ENCODE measurements at regions of chr22 and their contacts with region 1.

Region 1: GRCh38 chr22:38506118-38506962 is at the start of gene DDX17:
- DNase-seq: peak; percentile 98
- H3K4me3 ChIP-seq: peak within 1 kb of the TSS; percentile 66 to 89 (median 82)
- H3K27ac ChIP-seq: peak within 1 kb of the TSS; percentile 96
- H3K4me1 ChIP-seq: peaks cover 21% of the 10 kb centered on the region
- H3K27me3 ChIP-seq: no peaks in the 10 kb centered on the region
- CTCF ChIP-seq: no peak
- POLR2A ChIP-seq: peak; percentile 80
- total RNA-seq, gene DDX17: 377 and 393 TPM in 2 replicates

Region 2: DNA sequence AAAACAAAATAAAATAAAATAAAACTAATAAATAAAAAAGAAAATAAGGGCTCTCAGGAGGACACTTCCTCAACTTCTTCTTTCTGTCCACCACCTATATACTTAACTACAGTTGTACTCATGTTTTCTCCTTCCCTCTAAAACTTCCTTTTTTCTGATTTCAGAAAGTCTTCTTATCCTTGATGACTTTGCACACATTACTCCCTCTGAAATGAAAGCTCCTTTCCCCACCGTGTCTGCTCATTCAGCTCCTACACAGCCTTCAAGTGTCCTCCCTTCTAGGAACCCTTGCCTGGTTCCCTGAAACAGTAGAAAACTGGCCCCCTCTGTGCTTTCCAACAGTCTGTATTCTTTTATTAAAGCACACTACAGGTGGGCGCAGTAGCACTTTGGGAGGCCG is 18.1 kb after region 1 on chr22:
- CTCF ChIA-PET with region 1: interaction called, 12 read pairs
- POLR2A ChIA-PET with region 1: interaction called, 3 read pairs
- dilution Hi-C with region 1: no loop called
- intact Hi-C with region 1: no loop called
- DNase-seq: no peak
- H3K4me3 ChIP-seq: no peak overlapping the region
- H3K27ac ChIP-seq: no peak overlapping the region
- H3K4me1 ChIP-seq: no peaks in the 10 kb centered on the region
- H3K27me3 ChIP-seq: peaks cover 0 to 2% of the 10 kb centered on the region in 2 experiments
- CTCF ChIP-seq: no peak
- POLR2A ChIP-seq: no peak

Region 3: GRCh38 chr22:38569972-38570778 is 63.8 kb after region 1 on chr22 and contains the start of gene DMC1:
- CTCF ChIA-PET with region 1: interaction called, 3 read pairs
- POLR2A ChIA-PET with region 1: no interaction called
- dilution Hi-C with region 1: no loop called
- intact Hi-C with region 1: loop called (anchors 2 kb)
- DNase-seq: peak; percentile 69
- H3K4me3 ChIP-seq: peak within 1 kb of the TSS; percentile 19 to 75 (median 60)
- H3K27ac ChIP-seq: no peak within 1 kb of the TSS
- H3K4me1 ChIP-seq: peaks cover 7% of the 10 kb centered on the region
- H3K27me3 ChIP-seq: peaks cover 0 to 2% of the 10 kb centered on the region in 2 experiments
- CTCF ChIP-seq: no peak
- POLR2A ChIP-seq: no peak
- total RNA-seq, gene DMC1: 0.91 and 1.1 TPM in 2 replicates

Region 4: GRCh38 chr22:38656256-38657044 is 150.1 kb after region 1 on chr22 and contains the starts of genes CBY1 and FAM227A:
- CTCF ChIA-PET with region 1: no interaction called
- POLR2A ChIA-PET with region 1: no interaction called
- dilution Hi-C with region 1: no loop called
- intact Hi-C with region 1: loop called (anchors 1 kb)
- DNase-seq: peak; percentile 87
- H3K4me3 ChIP-seq: peak within 1 kb of the TSS; percentile 31 to 94 (median 82)
- H3K27ac ChIP-seq: peak within 1 kb of the TSS; percentile 96
- H3K4me1 ChIP-seq: peaks cover 11% of the 10 kb centered on the region
- H3K27me3 ChIP-seq: no peaks in the 10 kb centered on the region
- CTCF ChIP-seq: no peak
- POLR2A ChIP-seq: peak; percentile 18
- total RNA-seq, gene CBY1: 34.4 and 37.0 TPM in 2 replicates
- total RNA-seq, gene FAM227A: 1.4 and 1.9 TPM in 2 replicates

Region 5: DNA sequence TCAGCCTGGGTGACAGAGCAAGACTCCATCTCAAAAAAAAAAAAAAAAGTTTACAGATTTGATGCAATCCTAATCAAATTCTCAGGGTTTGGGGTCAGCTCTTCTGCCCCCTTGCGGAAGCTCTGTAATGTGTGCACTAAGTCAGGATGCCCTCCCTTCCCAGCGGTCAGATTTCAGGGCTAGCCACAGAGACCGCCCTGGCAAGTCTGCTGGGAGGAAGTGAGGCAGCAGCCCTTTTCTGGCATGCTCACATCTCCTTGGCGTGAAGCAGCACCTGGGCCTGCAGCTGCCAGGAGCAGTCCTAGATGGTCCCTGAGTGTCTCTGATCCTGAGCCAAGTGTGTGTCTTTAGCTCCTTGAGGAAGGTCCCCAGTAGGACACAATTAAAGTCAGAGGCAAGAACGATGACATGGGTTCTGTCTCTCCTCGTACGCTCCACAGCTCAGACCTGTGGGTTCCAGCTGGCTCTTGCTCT is 496.9 kb after region 1 on chr22:
- CTCF ChIA-PET with region 1: no interaction called
- POLR2A ChIA-PET with region 1: no interaction called
- dilution Hi-C with region 1: no loop called
- intact Hi-C with region 1: no loop called
- DNase-seq: peak; percentile 83
- H3K4me3 ChIP-seq: no peak overlapping the region
- H3K27ac ChIP-seq: no peak overlapping the region
- H3K4me1 ChIP-seq: no peaks in the 10 kb centered on the region
- H3K27me3 ChIP-seq: no peaks in the 10 kb centered on the region
- CTCF ChIP-seq: peak; percentile 67 to 72
- POLR2A ChIP-seq: no peak

Measured in endothelial cell of umbilical vein (primary cell).